ENCODE measurements at regions of chr3 and their contacts with region 1.

Region 1: GRCh38 chr3:12948891-12949711 is 107.7 kb upstream of the RPL32 start:
- DNase-seq: no peak
- ATAC-seq: peak; percentile 15; the same call in 1 of the 2 replicates
- H3K4me3 Mint-ChIP-seq: no peak overlapping the region
- H3K27ac Mint-ChIP-seq: no peak overlapping the region
- H3K4me1 Mint-ChIP-seq: peaks cover 12% of the 10 kb centered on the region
- H3K27me3 Mint-ChIP-seq: no peaks in the 10 kb centered on the region
- CTCF ChIP-seq: no peak

Region 2: GRCh38 chr3:12796171-12797123 is 152.7 kb before region 1 on chr3 and contains the start of gene CAND2:
- CTCF ChIA-PET with region 1: no interaction called
- POLR2A ChIA-PET with region 1: no interaction called
- DNase-seq: peak; percentile 48
- ATAC-seq: peak; percentile 85
- H3K4me3 Mint-ChIP-seq: peak within 1 kb of the TSS; percentile 83
- H3K27ac Mint-ChIP-seq: no peak within 1 kb of the TSS
- H3K4me1 Mint-ChIP-seq: peaks cover 20% of the 10 kb centered on the region
- H3K27me3 Mint-ChIP-seq: no peaks in the 10 kb centered on the region; the same call in 1 of the 2 replicates
- CTCF ChIP-seq: no peak
- total RNA-seq, gene CAND2: 13.7 to 15.4 TPM (median 14.3 TPM) in 3 replicates

Region 3: GRCh38 chr3:12901623-12902045 is 47.5 kb before region 1 on chr3:
- CTCF ChIA-PET with region 1: interaction called, 12 read pairs
- POLR2A ChIA-PET with region 1: no interaction called
- DNase-seq: no peak
- ATAC-seq: peak; percentile 84
- H3K4me3 Mint-ChIP-seq: no peak overlapping the region
- H3K27ac Mint-ChIP-seq: no peak overlapping the region
- H3K4me1 Mint-ChIP-seq: peaks cover 10% of the 10 kb centered on the region
- H3K27me3 Mint-ChIP-seq: no peaks in the 10 kb centered on the region
- CTCF ChIP-seq: no peak

Region 4: DNA sequence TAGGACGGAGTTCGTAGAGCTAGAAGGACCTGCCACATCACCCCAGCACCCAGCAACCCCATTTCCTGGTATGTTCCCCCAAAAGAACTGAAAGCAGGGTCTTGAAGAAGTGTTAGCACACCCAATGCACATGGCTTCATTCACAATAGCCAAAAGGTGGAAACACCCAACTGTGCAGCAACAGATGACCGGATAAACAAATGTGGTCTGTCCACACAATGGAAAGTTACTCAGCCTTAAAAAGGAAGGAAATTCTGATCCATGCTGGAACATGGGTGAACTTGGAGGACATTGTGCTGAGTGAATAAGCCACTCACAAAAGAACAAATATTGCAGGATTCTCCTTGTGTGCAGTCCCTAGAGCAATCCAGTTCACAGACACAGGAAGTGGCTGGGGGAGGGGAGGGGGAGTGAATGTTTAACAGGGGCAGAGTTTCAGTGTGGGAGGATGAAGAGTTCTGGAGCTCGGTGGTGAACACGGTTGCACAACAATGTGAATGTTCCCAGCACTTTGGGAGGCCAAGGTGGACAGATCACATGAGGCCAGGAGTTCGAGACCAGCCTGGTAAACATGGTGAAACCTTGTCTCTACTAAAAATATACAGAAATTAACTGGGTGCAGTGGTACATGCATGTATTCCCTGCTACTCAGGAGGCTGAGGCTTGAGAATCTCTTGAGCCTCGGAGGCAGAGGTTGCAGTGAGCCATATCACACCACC is 313.6 kb after region 1 on chr3:
- CTCF ChIA-PET with region 1: no interaction called
- POLR2A ChIA-PET with region 1: no interaction called
- DNase-seq: no peak
- ATAC-seq: no peak
- H3K4me3 Mint-ChIP-seq: no peak overlapping the region
- H3K27ac Mint-ChIP-seq: peak overlapping the region; percentile 48; the same call in 1 of the 2 replicates
- H3K4me1 Mint-ChIP-seq: peaks cover 22% of the 10 kb centered on the region
- H3K27me3 Mint-ChIP-seq: no peaks in the 10 kb centered on the region
- CTCF ChIP-seq: no peak

Measured in WTC11 (cell line).